ENCODE measurements at regions of chr2 and their contacts with region 1.

Region 1: DNA sequence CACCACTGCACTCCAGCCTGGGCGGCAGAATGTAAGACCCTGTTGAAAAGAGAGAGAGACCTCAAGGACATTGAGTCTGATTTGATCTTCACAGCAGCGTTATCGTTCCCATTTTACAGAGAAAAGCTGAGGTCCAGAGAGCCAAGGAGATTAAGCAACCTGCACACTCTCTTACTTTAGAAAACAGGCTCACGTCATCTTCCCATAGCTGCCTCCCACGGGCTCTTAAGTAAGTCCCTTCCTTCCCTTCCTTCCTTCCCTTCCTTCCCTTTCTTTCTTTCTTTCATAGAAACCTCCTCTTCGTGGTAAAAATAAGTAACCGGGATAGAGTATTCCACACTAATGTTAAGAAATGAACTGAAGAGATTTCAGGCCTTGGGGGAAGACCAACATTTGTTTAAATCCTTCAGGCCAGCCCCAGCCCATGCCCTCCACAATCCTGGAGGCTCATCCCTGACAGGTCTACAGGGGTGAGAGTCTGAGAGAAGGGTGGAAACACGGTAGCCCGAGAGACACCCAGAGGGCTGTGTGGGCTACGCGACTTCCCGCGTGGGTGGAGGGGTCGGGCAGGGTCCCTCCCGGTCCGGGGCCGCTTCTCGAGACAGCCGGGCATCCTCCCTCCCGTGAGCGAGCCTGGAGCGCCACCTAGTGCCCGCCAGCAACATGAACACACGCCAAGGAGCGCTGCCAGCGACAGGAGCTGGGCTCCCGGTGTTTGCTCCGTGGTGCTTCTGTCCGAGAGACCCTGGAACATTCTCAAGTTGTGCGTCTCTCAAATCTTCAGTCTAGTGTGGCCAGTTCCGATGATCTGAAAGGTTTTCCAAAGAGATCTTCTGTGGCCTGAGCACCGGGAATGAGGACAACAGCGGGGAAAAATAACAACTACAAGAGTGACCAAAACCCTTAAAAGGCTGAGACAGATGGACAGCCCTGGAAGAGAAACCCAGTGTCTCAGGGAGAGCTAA is 160.3 kb downstream of the INO80D start:
- DNase-seq: peak; percentile 91
- ATAC-seq: peak; percentile 91

Region 2: DNA sequence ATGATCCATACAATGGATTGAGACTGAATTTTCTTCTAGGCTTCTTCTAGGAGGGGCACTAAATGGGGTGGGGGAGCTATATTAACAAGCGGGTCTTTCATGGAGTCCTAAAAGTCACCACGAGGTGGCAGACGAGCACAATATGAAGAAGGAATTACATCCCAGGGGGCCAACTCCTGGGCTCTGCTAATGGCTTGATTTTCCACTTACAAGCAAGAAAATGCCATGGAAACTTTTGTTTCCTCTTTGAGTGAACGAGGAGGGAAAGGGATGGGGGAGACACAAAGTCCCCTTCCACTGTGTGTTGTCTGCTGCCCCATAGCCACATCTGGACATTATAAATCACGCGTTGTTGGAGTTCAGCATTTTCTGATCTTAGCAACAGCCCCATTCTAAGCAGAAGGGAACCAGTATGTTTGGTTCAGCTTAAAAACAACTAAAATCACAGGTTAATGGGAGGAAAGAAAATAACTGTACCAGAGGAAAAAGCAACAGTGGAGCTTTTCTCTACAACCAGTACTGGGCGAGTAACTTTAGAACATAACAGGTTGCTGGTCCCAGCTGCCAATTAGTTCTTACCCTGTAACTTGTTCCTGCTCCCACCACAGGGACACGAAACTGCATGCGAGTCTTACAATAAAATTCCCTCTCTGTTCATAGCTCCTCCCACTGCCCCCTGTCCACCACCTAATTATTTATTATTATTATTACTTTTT is 1665.3 kb before region 1 on chr2:
- intact Hi-C with region 1: loop called (anchors 10 kb)
- DNase-seq: no peak
- ATAC-seq: peak; percentile 64

Measured in Right ventricle myocardium inferior (tissue), 1 donor.